Psoas muscle (tissue), 8 donors: ENCODE measurements at regions of chr7 and their contacts with region 1.

Region 1: DNA sequence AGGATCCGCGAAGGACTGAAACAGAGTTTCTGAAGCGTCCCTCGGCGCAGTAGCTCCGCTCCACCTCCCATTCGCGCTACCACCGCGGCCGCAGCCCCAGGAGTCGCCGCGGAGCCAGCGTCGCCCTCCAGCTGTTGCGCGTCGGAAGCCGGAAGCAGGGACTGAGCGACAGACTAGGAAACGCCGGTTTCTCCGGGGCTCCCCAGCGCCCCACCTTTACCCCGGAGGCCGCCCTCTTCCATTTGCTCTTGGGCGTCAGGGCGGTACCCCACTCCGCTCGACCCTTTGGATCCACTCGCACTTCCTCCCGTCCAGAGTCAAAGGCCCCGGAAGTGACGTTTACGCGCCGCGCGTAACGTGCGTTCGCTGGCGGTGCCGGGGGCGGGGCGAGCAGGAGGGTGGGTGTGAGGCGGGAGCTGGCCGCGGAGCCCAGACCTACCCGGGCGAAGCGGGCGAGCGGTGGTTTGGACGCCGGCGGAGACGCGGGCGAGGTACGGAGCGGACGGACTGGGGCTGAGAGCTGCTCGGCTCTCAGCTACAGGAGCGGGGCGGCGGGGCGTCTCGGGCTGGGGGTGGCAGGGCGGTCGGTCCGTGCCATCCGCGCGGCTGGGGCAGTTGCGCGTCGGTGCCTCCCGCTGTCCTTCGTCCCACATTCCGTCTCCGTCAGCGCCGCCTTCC is at the start of gene RABGEF1:
- DNase-seq: peak; percentile 98 to 99
- ATAC-seq: peak; percentile 95 to 97 (median 95)
- H3K4me3 ChIP-seq: peak within 1 kb of the TSS; percentile 100
- H3K27ac ChIP-seq: peak within 1 kb of the TSS; percentile 99
- H3K4me1 ChIP-seq: peaks cover 14% of the 10 kb centered on the region
- H3K27me3 ChIP-seq: no peaks in the 10 kb centered on the region
- CTCF ChIP-seq: no peak
- total RNA-seq, gene RABGEF1: 18.1 to 20.3 (median 18.6) TPM

Region 2: DNA sequence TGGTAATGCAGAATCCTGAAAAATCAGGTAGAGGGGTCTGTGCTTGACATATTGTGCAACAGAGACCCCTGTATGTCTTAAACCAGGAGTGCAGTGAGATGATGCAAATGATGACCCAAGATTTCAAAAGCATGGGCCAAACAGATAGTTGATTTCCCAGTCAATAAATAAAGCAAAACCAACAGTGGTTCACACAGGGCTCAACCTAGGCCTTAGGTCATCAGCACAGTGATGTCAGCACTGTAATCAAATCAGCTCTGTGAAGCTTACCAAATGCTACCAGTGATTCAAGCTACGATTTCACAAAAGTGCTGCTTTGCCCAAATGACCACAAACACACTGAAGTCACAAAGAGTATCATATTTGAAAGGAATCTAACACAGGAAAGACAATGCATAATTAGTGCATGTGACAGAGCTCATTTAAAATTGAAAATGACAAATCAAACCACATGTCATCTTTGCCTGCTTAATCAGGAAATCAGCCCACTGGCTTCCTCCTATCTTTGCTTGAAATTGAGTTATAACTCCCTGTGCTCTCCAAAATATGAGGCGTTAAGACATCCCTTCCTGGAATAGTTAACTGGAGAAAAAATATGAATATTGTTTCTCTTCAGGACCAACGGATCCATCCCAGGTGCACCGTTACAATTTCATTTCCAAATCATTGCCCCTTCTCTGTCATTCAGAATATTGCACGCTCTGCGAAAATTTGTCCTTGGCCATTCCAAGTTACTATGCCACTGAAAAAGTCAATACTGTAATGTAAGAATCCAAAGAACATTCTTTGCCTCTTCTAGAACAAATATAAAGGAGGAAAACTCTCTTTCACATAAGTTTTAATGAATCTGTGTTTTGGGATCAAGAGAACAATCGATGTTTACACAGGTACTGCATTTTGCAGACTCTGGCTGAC is 706.7 kb before region 1 on chr7:
- intact Hi-C with region 1: no loop called
- DNase-seq: no peak
- ATAC-seq: no peak
- H3K4me3 ChIP-seq: no peak overlapping the region
- H3K27ac ChIP-seq: no peak overlapping the region
- H3K4me1 ChIP-seq: no peaks in the 10 kb centered on the region
- H3K27me3 ChIP-seq: no peaks in the 10 kb centered on the region
- CTCF ChIP-seq: no peak

Region 3: DNA sequence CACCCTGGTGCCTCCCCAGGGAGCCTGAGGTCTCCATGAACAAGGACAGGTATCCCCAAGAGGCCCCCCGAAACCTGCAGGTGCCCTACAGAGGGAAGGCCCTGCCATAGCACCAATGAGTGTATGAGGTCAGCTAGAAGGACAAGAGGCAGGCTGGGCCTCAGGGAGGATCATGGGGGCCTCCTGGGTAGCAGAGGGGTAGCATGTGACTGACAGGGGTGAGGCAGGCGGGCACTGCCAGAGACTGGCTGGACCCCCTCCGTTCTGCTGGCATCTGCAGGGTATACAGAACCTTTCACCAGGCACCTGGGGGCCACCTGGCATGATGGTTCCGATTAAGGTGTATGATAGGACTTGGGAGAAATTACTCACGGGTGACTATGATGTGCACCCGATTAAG is 191.0 kb before region 1 on chr7:
- intact Hi-C with region 1: no loop called
- DNase-seq: no peak
- ATAC-seq: no peak
- H3K4me3 ChIP-seq: no peak overlapping the region
- H3K27ac ChIP-seq: no peak overlapping the region
- H3K4me1 ChIP-seq: no peaks in the 10 kb centered on the region
- H3K27me3 ChIP-seq: no peaks in the 10 kb centered on the region
- CTCF ChIP-seq: no peak

Region 4: GRCh38 chr7:66654123-66654732 is 86.2 kb before region 1 on chr7:
- intact Hi-C with region 1: loop called (anchors 10 kb)
- DNase-seq: peak; percentile 98 to 99
- ATAC-seq: peak; percentile 97 to 98 (median 98)
- H3K4me3 ChIP-seq: peak overlapping the region; percentile 93
- H3K27ac ChIP-seq: peak overlapping the region; percentile 97
- H3K4me1 ChIP-seq: peaks cover 14% of the 10 kb centered on the region
- H3K27me3 ChIP-seq: no peaks in the 10 kb centered on the region
- CTCF ChIP-seq: peak; percentile 14

Region 5: DNA sequence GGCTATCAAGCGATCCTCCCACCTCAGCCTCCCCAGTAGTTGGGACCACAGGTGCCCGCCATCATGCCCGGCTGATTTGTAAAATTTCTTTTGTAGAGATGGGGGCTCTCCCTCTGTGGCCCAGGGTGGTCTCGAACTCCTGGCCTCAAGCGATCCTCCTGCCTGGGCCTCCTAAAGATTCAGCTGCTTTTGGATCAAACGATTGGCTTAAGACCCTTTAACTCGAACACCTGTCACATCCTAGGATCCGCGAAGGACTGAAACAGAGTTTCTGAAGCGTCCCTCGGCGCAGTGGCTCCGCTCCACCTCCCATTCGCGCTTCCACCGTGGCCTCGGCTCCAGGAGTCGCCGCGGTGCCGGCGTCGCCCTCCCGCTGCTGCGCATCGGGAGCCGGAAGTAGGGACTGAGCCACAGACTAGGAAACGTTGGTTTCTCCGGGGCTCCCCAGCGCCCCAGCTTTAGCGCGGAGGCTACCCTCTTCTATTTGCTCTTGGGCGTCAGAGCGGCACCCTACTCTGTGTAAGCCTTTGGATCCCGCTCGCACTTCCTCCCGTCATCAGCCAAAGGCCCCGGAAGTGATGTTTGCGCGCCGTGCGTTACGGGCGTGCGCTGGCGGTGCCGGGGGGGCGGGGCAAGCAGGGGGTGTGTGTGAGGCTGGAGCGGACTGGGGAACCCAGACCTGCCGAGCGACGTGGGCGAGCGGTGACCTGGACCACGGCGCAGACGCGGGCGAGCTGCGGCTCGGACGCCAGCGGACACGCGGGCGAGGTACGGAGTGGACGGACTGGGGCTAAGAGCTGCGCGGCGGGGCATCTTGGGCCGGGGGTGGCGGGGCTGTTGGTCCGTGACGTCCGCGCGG is 58.7 kb before region 1 on chr7:
- intact Hi-C with region 1: loop called (anchors 2 to 5 kb)
- DNase-seq: peak; percentile 97 to 98
- ATAC-seq: peak; percentile 99
- H3K4me3 ChIP-seq: peak overlapping the region; percentile 99
- H3K27ac ChIP-seq: peak overlapping the region; percentile 99
- H3K4me1 ChIP-seq: peaks cover 15% of the 10 kb centered on the region
- H3K27me3 ChIP-seq: no peaks in the 10 kb centered on the region
- CTCF ChIP-seq: no peak

Region 6: GRCh38 chr7:66687186-66687585 is 53.3 kb before region 1 on chr7:
- intact Hi-C with region 1: loop called (anchors 2 to 5 kb)
- DNase-seq: no peak
- ATAC-seq: no peak
- H3K4me3 ChIP-seq: no peak overlapping the region
- H3K27ac ChIP-seq: no peak overlapping the region
- H3K4me1 ChIP-seq: peaks cover 7% of the 10 kb centered on the region
- H3K27me3 ChIP-seq: no peaks in the 10 kb centered on the region
- CTCF ChIP-seq: no peak

Region 7: DNA sequence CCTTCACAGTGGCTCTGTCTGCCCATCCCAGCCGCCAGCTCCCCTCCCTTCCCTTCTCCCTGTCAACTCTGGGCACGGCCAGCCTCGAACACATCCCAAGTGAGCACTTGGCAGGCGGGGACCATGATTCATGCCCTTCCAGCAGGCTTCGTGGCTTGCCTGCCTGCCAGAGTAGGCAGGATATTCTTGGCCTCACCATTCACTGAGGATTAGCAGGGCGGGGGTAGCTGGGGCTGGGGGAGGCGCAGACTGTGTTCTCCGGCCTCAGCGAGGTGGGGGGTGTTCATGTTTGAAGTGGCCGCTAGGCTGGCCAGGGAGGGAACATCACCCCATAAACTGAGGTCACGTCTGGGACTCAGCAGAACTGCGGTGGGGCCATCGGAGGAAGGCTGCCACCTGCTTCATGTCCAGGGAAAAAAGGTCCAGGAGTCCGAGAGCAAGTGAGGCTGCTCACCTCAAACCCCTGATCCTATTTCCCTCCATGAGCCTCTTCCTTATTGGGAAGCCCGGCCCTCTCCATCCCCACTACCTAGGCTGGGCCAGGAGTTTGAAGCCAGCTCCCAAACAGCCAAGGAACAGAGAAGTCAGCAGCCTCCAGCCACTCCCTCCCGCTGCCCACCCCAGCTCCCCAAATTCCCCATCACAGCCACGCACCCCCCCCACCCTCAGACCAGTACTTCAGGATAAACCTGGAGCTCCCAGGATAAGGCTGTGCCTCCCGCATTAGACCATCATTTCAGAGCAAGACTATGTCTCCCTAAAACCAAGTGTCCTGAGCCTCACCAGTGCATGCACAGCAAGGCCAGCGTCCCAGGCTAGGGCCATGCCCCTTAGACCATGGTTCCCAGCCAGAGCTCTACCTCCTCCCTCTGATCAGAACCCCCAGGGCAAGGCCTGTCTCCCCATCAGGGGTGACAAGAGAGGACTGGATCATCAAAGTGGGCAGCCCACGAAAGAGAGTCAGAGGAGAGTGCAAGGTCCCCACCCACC is 42.7 kb before region 1 on chr7:
- intact Hi-C with region 1: loop called in 1 of 2 experiments (anchors 5 kb)
- DNase-seq: peak; percentile 64 to 80
- ATAC-seq: peak; percentile 78 to 90 (median 88)
- H3K4me3 ChIP-seq: no peak overlapping the region
- H3K27ac ChIP-seq: no peak overlapping the region
- H3K4me1 ChIP-seq: no peaks in the 10 kb centered on the region
- H3K27me3 ChIP-seq: no peaks in the 10 kb centered on the region
- CTCF ChIP-seq: no peak